Heart left ventricle (tissue), 16 donors: ENCODE measurements at regions of chr3 and their contacts with region 1.

Region 1: GRCh38 chr3:150787741-150788370 is 24.9 kb upstream of the SIAH2 start:
- DNase-seq: peak; percentile 75 to 91 (median 86)
- ATAC-seq: peak in 3 of 4 donors; percentile 79 to 88 (median 84)
- H3K4me3 ChIP-seq: no peak overlapping the region
- H3K27ac ChIP-seq: no peak overlapping the region
- H3K4me1 ChIP-seq: no peaks in the 10 kb centered on the region
- H3K27me3 ChIP-seq: peaks cover 0 to 11% (median 0%) of the 10 kb centered on the region in 9 donors
- CTCF ChIP-seq: peak; percentile 77 to 95 (median 88)
- POLR2A ChIP-seq: no peak

Region 2: GRCh38 chr3:150449169-150449721 is 338.6 kb before region 1 on chr3:
- intact Hi-C with region 1: no loop called
- DNase-seq: no peak
- ATAC-seq: peak in 1 of 4 donors; percentile 45
- H3K4me3 ChIP-seq: no peak overlapping the region
- H3K27ac ChIP-seq: no peak overlapping the region
- H3K4me1 ChIP-seq: peaks cover 3 to 65% (median 36%) of the 10 kb centered on the region in 12 donors
- H3K27me3 ChIP-seq: no peaks in the 10 kb centered on the region
- CTCF ChIP-seq: no peak
- POLR2A ChIP-seq: no peak

Region 3: DNA sequence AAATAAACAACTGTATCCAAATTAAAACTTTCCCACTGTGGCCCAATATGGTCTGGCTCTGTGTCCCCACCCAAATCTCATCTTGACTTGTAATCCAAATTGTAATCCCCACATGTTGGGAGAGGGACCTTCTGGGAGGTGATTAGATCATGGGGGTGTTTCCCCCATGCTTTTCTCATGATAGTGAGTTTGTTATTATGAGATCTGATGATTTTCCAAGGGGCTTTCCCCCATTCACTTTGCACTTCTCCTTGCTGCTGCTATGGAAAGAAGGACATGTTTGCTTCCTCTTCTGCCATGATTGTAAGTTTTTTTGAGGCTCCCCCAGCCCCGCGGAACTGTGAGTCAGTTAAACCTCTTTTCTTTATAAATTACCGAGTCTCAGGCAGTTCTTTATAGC is 62.3 kb after region 1 on chr3:
- intact Hi-C with region 1: no loop called
- DNase-seq: no peak
- ATAC-seq: no peak
- H3K4me3 ChIP-seq: no peak overlapping the region
- H3K27ac ChIP-seq: no peak overlapping the region
- H3K4me1 ChIP-seq: no peaks in the 10 kb centered on the region
- H3K27me3 ChIP-seq: no peaks in the 10 kb centered on the region
- CTCF ChIP-seq: no peak
- POLR2A ChIP-seq: no peak

Region 4: GRCh38 chr3:150861851-150862250 is 74.0 kb after region 1 on chr3:
- intact Hi-C with region 1: loop called in 7 of 10 experiments (anchors 2 to 10 kb)
- DNase-seq: no peak
- ATAC-seq: no peak
- H3K4me3 ChIP-seq: no peak overlapping the region
- H3K27ac ChIP-seq: no peak overlapping the region
- H3K4me1 ChIP-seq: peaks cover 0 to 2% (median 0%) of the 10 kb centered on the region in 12 donors
- H3K27me3 ChIP-seq: no peaks in the 10 kb centered on the region
- CTCF ChIP-seq: no peak
- POLR2A ChIP-seq: no peak

Region 5: DNA sequence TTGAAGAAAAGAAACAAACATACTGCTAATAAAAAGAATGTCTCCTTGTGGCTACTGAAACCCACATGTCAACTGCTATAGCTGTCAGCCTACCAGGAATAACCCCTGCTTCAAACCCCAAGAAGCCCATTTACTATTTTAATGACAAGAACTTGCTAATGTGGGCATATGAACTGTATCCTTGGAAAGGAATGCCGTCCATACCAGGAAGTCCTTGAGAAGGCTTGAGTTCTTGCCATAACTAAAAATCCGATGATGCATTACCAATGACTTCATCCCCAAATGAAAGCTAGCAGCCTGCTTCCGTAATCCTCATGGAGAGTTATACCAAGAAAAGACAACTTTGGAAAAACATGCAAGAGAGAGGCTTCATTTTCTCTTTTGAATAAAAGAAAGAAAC is 82.5 kb after region 1 on chr3:
- intact Hi-C with region 1: loop called in 4 of 10 experiments (anchors 2 to 10 kb)
- DNase-seq: no peak
- ATAC-seq: peak in 2 of 4 donors; percentile 49 to 73
- H3K4me3 ChIP-seq: no peak overlapping the region
- H3K27ac ChIP-seq: peak overlapping the region in 5 of 12 donors; percentile 27 to 46 (median 42)
- H3K4me1 ChIP-seq: peaks cover 0 to 9% (median 0%) of the 10 kb centered on the region in 12 donors
- H3K27me3 ChIP-seq: no peaks in the 10 kb centered on the region
- CTCF ChIP-seq: no peak
- POLR2A ChIP-seq: no peak